ENCODE measurements at regions of chr6 and their contacts with region 1.

Region 1: GRCh38 chr6:27809939-27810767 is 102.0 kb downstream of the OR2B2 start:
- H3K4me3 ChIP-seq: peak overlapping the region; percentile 87
- H3K27ac ChIP-seq: peak overlapping the region; percentile 77
- H3K4me1 ChIP-seq: peaks cover 5% of the 10 kb centered on the region; the same call in 1 of the 2 replicates
- CTCF ChIP-seq: peak; percentile 9; the same call in 1 of the 2 replicates

Region 2: GRCh38 chr6:27132532-27133280 is 677.4 kb before region 1 on chr6:
- CTCF ChIA-PET with region 1: no interaction called
- POLR2A ChIA-PET with region 1: interaction called, 61 read pairs
- H3K4me3 ChIP-seq: peak overlapping the region; percentile 71
- H3K27ac ChIP-seq: peak overlapping the region; percentile 95
- H3K4me1 ChIP-seq: peaks cover 10% of the 10 kb centered on the region
- CTCF ChIP-seq: no peak

Region 3: GRCh38 chr6:27528714-27529113 is 281.4 kb before region 1 on chr6:
- CTCF ChIA-PET with region 1: no interaction called
- POLR2A ChIA-PET with region 1: no interaction called
- H3K4me3 ChIP-seq: no peak overlapping the region
- H3K27ac ChIP-seq: no peak overlapping the region
- H3K4me1 ChIP-seq: no peaks in the 10 kb centered on the region
- CTCF ChIP-seq: no peak

Region 4: DNA sequence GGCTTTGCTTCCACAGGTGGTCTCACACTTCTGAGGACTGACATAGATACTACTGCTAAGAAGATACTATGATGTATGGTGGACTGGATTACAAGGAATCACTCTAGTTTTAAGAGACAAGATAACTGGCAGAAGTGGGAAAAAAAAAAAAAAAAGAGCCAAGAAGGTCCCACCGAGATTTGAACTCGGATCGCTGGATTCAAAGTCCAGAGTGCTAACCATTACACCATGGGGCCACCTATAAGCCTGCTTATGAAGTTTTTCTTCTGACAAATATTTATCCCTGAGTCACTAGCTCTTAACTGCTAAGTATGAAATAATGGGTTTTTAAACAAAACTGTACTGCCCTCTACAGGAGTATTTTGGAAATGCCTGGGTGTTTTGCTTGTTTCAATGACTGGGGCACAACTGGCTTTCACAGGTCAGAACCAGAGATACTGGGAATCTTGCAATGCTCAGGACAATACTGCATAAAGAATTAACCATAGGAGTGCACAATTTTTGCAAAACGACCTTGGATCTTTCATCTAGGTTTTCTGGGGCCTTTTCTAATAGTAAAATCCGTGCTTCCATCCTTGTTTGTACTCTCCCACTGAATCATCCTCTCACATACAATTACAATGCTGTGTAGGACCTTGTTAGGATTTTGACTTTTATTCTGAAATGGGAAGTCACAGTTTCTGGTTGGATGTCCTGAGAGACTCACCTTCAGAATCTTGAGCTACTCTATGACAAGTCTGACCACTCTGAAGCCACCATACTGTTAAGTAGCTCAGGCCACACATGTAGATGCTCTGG is 14.3 kb before region 1 on chr6:
- CTCF ChIA-PET with region 1: interaction called, 31 read pairs
- POLR2A ChIA-PET with region 1: interaction called, 52 read pairs
- H3K4me3 ChIP-seq: no peak overlapping the region
- H3K27ac ChIP-seq: no peak overlapping the region
- H3K4me1 ChIP-seq: no peaks in the 10 kb centered on the region
- CTCF ChIP-seq: peak; percentile 74

Region 5: GRCh38 chr6:27825025-27825793 is 15.1 kb after region 1 on chr6:
- CTCF ChIA-PET with region 1: no interaction called
- POLR2A ChIA-PET with region 1: interaction called, 92 read pairs
- H3K4me3 ChIP-seq: peak overlapping the region; percentile 49
- H3K27ac ChIP-seq: no peak overlapping the region
- H3K4me1 ChIP-seq: no peaks in the 10 kb centered on the region
- CTCF ChIP-seq: no peak

Region 6: DNA sequence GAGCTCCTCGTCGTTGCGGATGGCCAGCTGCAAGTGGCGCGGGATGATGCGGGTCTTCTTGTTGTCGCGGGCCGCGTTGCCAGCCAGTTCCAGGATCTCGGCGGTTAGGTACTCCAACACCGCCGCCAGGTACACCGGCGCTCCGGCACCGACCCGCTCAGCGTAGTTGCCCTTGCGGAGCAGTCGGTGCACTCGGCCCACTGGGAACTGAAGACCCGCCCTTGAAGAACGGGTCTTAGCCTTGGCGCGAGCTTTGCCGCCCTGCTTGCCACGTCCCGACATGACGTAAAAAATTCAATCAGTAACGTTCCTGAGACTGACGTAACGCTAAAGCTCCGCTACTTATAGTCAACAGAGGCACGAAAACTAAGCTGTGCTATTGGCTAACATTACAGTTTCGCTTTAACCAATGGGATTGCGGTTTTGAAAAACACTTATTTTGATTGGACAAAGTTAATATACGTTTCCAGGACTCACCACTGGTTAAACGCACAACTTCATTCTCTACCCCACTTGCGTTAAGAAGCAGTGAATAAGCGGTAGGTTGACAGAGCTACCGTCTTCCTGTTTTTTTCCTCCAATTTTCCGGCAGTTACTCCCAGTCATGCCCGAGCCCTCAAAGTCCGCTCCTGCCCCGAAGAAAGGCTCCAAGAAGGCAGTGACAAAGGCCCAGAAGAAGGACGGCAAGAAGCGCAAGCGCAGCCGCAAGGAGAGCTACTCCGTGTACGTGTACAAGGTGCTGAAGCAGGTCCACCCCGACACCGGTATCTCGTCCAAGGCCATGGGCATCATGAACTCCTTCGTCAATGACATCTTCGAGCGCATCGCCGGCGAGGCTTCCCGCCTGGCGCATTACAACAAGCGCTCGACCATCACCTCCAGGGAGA is 28.1 kb after region 1 on chr6:
- CTCF ChIA-PET with region 1: interaction called, 7 read pairs
- POLR2A ChIA-PET with region 1: interaction called, 220 read pairs
- H3K4me3 ChIP-seq: peak overlapping the region; percentile 65
- H3K27ac ChIP-seq: peak overlapping the region; percentile 90
- H3K4me1 ChIP-seq: no peaks in the 10 kb centered on the region
- CTCF ChIP-seq: no peak; the same call in 1 of the 2 replicates

Region 7: GRCh38 chr6:27851440-27851839 is 41.3 kb after region 1 on chr6:
- CTCF ChIA-PET with region 1: no interaction called
- POLR2A ChIA-PET with region 1: no interaction called
- H3K4me3 ChIP-seq: no peak overlapping the region
- H3K27ac ChIP-seq: no peak overlapping the region
- H3K4me1 ChIP-seq: no peaks in the 10 kb centered on the region
- CTCF ChIP-seq: no peak

Region 8: GRCh38 chr6:27864906-27865849 is 55.0 kb after region 1 on chr6:
- CTCF ChIA-PET with region 1: interaction called, 4 read pairs
- POLR2A ChIA-PET with region 1: interaction called, 77 read pairs
- H3K4me3 ChIP-seq: peak overlapping the region; percentile 78
- H3K27ac ChIP-seq: peak overlapping the region; percentile 63
- H3K4me1 ChIP-seq: no peaks in the 10 kb centered on the region
- CTCF ChIP-seq: no peak

Region 9: GRCh38 chr6:27871924-27872638 is 61.9 kb after region 1 on chr6:
- CTCF ChIA-PET with region 1: interaction called, 4 read pairs
- POLR2A ChIA-PET with region 1: interaction called, 77 read pairs
- H3K4me3 ChIP-seq: peak overlapping the region; percentile 41
- H3K27ac ChIP-seq: 0 out of 2 replicates have a peak overlapping the region, but pooled peaks have one; percentile 13
- H3K4me1 ChIP-seq: no peaks in the 10 kb centered on the region
- CTCF ChIP-seq: no peak